Naive thymus-derived CD8-positive, alpha-beta T cell (primary cell): ENCODE measurements at regions of chr17 and their contacts with region 1.

Region 1: DNA sequence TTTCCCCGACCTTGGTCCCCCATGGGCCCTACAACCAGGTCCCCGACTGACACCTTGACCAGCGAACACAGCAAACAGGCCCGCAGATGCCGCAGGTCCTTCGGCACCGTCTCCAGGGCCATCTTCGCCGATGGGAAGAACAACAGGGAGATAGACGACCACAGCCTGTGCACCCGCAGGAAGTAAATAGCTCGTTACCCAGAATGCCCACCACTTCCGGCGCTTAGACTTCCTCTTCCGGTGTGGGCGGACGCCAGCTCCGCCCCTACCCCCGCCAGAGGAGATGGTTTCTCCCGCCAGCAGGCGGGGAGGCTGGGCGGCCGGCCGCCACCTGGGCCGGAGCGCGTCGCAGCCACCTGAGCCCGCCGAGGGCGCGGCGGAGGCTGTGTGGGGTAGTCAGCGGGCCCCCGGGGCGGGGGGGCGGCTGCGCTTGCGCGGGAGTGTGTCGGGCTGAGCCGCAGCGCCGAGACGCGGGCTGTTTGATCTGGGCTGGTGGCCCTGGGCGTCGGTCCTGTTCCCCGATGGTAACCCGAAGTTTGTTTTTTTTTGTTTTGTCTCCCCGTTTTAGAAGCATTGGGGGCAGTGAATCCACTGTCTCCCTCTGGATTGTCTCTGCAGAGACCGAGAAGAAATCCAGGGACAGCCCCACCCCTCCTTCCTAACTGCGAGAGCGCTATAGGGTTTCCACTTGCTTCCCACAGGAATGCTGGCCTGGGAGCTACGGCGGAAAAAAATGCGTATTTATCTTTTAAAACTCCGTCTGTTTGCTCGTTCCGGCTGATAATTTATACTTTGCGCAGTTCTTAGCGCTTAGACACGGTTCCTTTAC is at the start of gene SUPT4H1:
- DNase-seq: peak; percentile 86 to 94 (median 90)
- ATAC-seq: peak; percentile 92
- H3K4me3 Mint-ChIP-seq: peak within 1 kb of the TSS; percentile 99 to 100 (median 100)
- H3K27ac Mint-ChIP-seq: peak within 1 kb of the TSS; percentile 97 to 100 (median 99)
- H3K4me1 Mint-ChIP-seq: peaks cover 41 to 75% (median 69%) of the 10 kb centered on the region in 4 donors
- H3K27me3 Mint-ChIP-seq: no peaks in the 10 kb centered on the region
- polyA plus RNA-seq, gene SUPT4H1: 63.7 to 97.4 (median 76.1) TPM

Region 2: DNA sequence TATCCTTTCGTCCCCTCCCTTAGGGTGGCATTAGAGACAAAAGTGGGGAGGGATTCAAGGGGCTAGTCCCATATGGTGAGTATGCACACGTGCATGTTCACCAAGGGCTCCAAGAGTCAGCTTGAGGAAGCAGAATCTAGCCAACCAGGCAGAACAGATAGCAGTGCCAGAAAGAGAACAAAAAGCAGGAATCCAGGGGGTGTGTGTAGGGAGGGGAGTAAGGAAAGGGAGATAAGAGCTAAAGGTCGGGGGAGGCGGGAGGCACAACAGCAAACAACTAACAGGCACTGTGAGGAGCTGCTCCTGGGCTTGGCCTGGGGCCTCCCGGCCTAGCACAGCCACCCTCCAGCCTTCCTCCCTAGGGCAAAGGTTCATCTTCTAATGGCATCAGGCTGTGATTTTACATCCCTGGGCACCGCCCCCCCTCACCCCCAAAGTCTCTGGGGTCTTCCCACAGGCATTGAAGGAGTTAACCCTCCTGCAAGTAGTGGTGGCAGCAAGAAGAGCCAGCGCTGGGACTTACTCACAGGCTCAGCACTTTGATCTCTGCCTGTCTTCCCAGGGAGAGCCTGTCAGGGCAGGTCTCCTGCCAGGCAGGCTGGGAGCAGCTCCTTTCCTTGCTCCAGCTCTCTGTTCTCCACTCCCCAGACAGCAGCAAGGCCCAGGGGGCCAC is 12.2 kb after region 1 on chr17:
- POLR2A ChIA-PET with region 1: interaction called, 18 read pairs
- DNase-seq: no peak
- ATAC-seq: no peak
- H3K4me3 Mint-ChIP-seq: no peak overlapping the region
- H3K27ac Mint-ChIP-seq: peak overlapping the region in 2 of 10 donors; percentile 46 to 55
- H3K4me1 Mint-ChIP-seq: peaks cover 13 to 32% (median 20%) of the 10 kb centered on the region in 4 donors
- H3K27me3 Mint-ChIP-seq: no peaks in the 10 kb centered on the region

Region 3: GRCh38 chr17:58417300-58418092 is 65.3 kb after region 1 on chr17 and contains the start of gene RNF43:
- POLR2A ChIA-PET with region 1: interaction called, 17 read pairs
- DNase-seq: peak; percentile 62 to 94 (median 86)
- ATAC-seq: peak; percentile 100
- H3K4me3 Mint-ChIP-seq: peak within 1 kb of the TSS in 2 of 10 donors; percentile 5 to 52
- H3K27ac Mint-ChIP-seq: peak within 1 kb of the TSS in 8 of 10 donors; percentile 17 to 80 (median 64)
- H3K4me1 Mint-ChIP-seq: peaks cover 3 to 15% (median 12%) of the 10 kb centered on the region in 4 donors
- H3K27me3 Mint-ChIP-seq: no peaks in the 10 kb centered on the region
- polyA plus RNA-seq, gene RNF43: 0.07 to 0.90 (median 0.75) TPM

Region 4: GRCh38 chr17:58436805-58437239 is 84.6 kb after region 1 on chr17:
- POLR2A ChIA-PET with region 1: no interaction called
- DNase-seq: no peak
- ATAC-seq: no peak
- H3K4me3 Mint-ChIP-seq: no peak overlapping the region
- H3K27ac Mint-ChIP-seq: no peak overlapping the region
- H3K4me1 Mint-ChIP-seq: peaks cover 0 to 4% (median 0%) of the 10 kb centered on the region in 4 donors
- H3K27me3 Mint-ChIP-seq: no peaks in the 10 kb centered on the region

Region 5: DNA sequence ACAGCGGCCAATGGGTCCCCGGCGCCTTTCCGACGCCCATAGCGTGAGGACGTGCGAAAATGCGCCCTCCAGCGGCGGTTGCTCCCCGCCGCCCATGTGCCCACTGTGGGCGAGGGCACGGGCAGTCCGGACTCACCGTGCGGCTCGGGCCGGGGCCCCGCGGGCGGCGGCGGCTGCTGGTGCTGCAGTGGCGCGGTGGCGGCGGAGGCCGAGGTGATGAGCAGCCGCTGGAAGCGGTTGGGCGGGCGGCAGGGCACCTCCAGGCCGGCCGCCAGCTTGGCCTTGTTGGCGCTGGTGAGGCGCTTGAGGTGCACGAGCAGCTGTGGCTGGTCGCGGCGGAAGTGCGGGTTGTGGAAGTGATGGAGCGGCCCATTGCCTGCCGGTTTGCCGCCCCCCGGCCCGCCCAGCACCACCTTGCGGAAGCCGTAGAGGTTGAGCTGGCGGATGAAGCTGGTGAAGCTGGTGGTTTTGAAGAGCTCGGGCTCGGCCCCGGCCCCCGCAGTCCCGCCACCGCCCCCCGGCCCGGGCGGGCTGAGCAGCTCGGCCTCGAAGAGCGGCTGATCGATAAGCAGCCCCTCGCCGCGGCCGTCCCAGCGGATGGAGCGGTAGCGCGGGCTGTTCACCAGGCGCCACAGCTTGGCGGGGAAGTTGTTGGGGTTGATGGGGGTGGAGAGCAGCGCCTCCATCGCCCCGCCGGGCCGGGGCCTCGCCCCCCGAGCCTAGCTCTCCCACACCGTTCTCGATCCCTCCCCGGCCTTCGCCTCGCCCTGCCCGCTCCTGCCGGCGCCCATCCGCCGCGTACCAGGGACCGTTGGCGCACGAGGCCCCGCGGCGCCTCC is 135.6 kb after region 1 on chr17 and contains the start of gene HSF5:
- POLR2A ChIA-PET with region 1: interaction called, 13 read pairs
- DNase-seq: peak; percentile 61 to 89 (median 76)
- ATAC-seq: peak; percentile 94 to 96
- H3K4me3 Mint-ChIP-seq: peak within 1 kb of the TSS; percentile 41 to 82 (median 69)
- H3K27ac Mint-ChIP-seq: peak within 1 kb of the TSS in 9 of 10 donors; percentile 47 to 88 (median 56)
- H3K4me1 Mint-ChIP-seq: peaks cover 5 to 22% (median 8%) of the 10 kb centered on the region in 4 donors
- H3K27me3 Mint-ChIP-seq: no peaks in the 10 kb centered on the region
- polyA plus RNA-seq, gene HSF5: 0.14 to 1.8 (median 0.73) TPM